PC-3 (cell line): ENCODE measurements at regions of chr7 and their contacts with region 1.

Region 1: GRCh38 chr7:141654551-141654950 is 47.4 kb downstream of the DENND11 start:
- DNase-seq: peak; percentile 74
- ATAC-seq: peak; percentile 82
- H3K4me3 ChIP-seq: no peak overlapping the region
- H3K27ac ChIP-seq: no peak overlapping the region
- H3K4me1 ChIP-seq: no peaks in the 10 kb centered on the region
- H3K27me3 ChIP-seq: no peaks in the 10 kb centered on the region
- CTCF ChIP-seq: peak; percentile 88

Region 2: GRCh38 chr7:141533149-141533949 is 121.2 kb before region 1 on chr7:
- CTCF ChIA-PET with region 1: interaction called, 5 read pairs
- POLR2A ChIA-PET with region 1: no interaction called
- intact Hi-C with region 1: loop called (anchors 2 kb)
- DNase-seq: peak; percentile 78
- ATAC-seq: peak; percentile 94
- H3K4me3 ChIP-seq: no peak overlapping the region
- H3K27ac ChIP-seq: no peak overlapping the region
- H3K4me1 ChIP-seq: no peaks in the 10 kb centered on the region
- H3K27me3 ChIP-seq: peaks cover 21% of the 10 kb centered on the region
- CTCF ChIP-seq: peak; percentile 96

Region 3: DNA sequence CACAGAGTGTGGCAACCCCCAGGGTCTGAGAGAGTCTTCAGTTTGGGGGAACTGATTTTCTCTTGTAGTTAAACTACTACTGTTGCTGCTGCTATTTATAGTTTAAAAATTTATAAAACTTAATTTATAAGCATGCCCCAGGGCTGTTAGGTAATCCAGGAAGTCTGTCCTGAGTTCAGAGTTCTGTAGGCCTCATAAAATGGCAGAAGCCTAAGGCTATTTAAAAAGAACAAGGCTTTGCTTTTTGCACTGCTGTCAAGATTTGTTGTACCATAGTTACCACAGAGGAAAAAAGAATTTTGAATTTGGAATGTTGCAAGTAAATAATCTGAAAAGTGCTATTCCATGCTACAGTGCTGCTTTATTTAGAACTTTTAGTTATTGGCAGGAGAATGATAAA is 37.3 kb before region 1 on chr7:
- CTCF ChIA-PET with region 1: no interaction called
- POLR2A ChIA-PET with region 1: no interaction called
- intact Hi-C with region 1: loop called (anchors 1 kb)
- DNase-seq: peak; percentile 53
- ATAC-seq: peak; percentile 73
- H3K4me3 ChIP-seq: no peak overlapping the region
- H3K27ac ChIP-seq: no peak overlapping the region
- H3K4me1 ChIP-seq: peaks cover 9% of the 10 kb centered on the region; the same call in 1 of the 2 replicates
- H3K27me3 ChIP-seq: no peaks in the 10 kb centered on the region
- CTCF ChIP-seq: no peak

Region 4: DNA sequence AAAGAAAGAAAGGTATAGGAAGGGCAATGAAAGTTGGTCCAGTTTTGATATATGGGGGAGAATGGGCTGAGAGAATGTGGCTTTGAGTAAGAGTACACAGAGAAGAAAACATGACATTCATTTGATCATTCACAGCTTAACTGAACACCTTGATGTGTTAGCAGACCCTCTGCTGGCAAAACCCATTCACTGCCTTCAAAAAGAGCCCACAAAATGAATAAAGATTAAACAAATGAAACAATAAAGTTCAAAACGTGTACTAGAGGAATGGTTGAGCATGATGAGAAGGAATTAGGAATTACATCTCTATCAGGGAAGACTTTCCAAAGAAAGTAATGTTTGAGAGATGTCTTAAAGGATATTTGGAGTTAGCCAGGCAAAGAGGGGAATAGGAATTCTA is 55.8 kb after region 1 on chr7:
- CTCF ChIA-PET with region 1: interaction called, 7 read pairs
- POLR2A ChIA-PET with region 1: no interaction called
- intact Hi-C with region 1: loop called (anchors 1 kb)
- DNase-seq: no peak
- ATAC-seq: no peak
- H3K4me3 ChIP-seq: no peak overlapping the region
- H3K27ac ChIP-seq: no peak overlapping the region
- H3K4me1 ChIP-seq: peaks cover 3% of the 10 kb centered on the region
- H3K27me3 ChIP-seq: no peaks in the 10 kb centered on the region
- CTCF ChIP-seq: peak; percentile 47; the same call in 1 of the 2 replicates

Region 5: DNA sequence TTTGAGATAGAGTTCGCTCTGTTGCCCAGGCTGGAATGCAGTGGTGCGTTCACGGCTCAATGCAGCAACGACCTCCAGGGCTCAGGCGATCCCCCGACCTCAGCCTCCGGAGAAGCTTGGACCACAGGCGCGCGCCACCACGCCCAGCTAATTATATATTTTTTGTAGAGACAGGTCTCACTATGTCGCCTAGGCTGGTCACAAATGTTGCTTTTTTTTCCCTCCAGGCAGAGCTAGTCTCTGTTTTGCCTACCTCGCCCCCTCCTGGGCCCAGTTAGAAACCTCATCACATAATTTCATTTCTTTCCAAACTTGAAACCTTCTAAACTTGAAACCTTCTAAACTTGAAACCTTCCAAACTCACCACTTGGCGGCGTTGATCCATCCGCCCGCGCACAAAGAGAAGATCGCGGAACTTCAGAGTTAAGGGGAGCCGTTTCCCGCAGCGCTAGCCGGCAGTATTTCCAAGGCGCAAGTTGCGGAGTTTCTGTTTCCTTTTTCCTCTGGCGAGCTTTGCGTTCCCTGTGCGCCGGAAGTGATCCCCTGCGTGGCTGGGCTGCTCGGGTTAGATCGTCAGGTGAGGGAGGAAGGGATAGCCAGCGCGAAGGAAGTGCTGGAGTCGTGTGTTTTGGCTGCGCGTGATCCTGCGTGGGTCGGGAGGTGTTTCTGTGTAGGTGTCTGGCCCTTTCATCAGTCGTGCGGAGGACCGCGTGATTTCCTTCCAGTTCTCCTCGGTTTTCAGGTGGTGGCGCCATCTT is 83.5 kb after region 1 on chr7 and contains the start of gene SSBP1:
- CTCF ChIA-PET with region 1: interaction called, 39 read pairs
- POLR2A ChIA-PET with region 1: no interaction called
- intact Hi-C with region 1: loop called (anchors 1 kb)
- DNase-seq: peak; percentile 95
- ATAC-seq: peak; percentile 86
- H3K4me3 ChIP-seq: peak within 1 kb of the TSS; percentile 94
- H3K27ac ChIP-seq: peak within 1 kb of the TSS; percentile 57
- H3K4me1 ChIP-seq: peaks cover 20% of the 10 kb centered on the region
- H3K27me3 ChIP-seq: no peaks in the 10 kb centered on the region
- CTCF ChIP-seq: peak; percentile 88
- total RNA-seq, gene SSBP1: 212 and 269 TPM in 2 replicates

Region 6: DNA sequence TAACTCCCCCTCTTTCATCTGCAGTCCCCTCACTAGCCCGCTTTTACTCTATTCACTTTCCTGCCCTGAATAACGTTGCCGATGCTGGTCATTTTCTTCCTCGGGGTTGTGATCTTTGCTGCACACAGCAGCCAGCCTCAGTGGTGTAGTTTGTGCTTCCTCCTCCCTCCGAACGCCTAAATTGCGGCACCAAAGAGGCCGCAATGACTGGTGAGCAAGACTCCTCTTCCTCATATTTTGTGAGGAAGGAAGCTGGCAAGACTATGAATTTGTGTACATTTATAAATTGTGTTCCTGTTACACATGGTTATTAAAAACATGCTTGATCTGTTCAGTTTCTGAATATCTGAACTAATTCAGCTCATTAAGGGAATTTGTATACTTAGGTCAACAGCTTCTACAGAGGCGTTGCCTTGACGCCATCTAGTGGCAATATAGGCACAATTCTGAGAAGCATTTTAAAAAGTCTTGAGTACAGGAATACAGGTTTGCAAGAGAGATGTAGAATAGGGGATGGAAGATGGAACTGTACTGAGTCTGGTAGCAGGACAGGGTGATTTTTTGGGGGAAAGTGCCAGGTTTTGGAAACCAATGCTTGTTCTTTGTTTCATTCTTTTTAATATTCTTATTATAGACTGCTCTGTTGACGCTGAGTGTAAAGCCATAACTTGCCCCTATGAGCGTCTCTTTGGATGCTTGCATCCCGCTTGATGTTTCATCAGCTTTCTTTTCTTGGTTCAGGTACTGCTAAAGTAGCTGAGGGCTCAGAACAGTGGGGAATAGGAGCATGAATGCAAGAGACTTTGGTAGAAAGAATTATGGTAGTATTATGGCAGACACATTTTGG is 131.4 kb after region 1 on chr7:
- CTCF ChIA-PET with region 1: interaction called, 13 read pairs
- POLR2A ChIA-PET with region 1: no interaction called
- intact Hi-C with region 1: loop called (anchors 1 kb)
- DNase-seq: peak; percentile 69
- ATAC-seq: peak; percentile 94
- H3K4me3 ChIP-seq: no peak overlapping the region
- H3K27ac ChIP-seq: no peak overlapping the region
- H3K4me1 ChIP-seq: no peaks in the 10 kb centered on the region
- H3K27me3 ChIP-seq: no peaks in the 10 kb centered on the region
- CTCF ChIP-seq: peak; percentile 91